RWPE1 (cell line): ENCODE measurements at regions of chr7 and their contacts with region 1.

Region 1: DNA sequence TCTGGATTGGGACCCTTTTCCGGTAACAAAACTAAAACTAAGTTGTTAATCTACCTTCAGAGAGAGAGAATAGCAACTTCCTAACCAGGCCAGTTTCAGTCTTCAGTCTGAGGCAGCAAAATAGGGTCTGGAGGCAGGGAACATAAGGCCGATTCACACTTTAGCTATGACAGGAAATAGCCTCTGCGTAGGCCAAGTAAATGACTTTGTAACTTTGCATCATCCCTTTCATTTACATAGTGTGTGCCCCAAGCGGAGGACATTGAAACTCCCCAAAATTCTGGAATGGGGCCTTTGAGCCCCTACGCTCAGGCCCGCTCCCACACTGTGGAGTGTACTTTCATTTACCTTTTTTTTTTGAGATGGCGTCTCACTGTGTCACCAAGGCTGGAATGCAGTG is 1.7 kb upstream of the UPP1 start:
- DNase-seq: no peak
- H3K27ac ChIP-seq: peak overlapping the region; percentile 100
- CTCF ChIP-seq: no peak

Region 2: GRCh38 chr7:47991741-47992311 is 95.5 kb before region 1 on chr7:
- CTCF ChIA-PET with region 1: interaction called, 4 read pairs
- POLR2A ChIA-PET with region 1: interaction called, 10 read pairs
- DNase-seq: peak; percentile 62
- H3K27ac ChIP-seq: peak overlapping the region; percentile 50
- CTCF ChIP-seq: peak; percentile 75

Region 3: GRCh38 chr7:48058990-48059389 is 28.4 kb before region 1 on chr7:
- CTCF ChIA-PET with region 1: no interaction called
- POLR2A ChIA-PET with region 1: no interaction called
- DNase-seq: no peak
- H3K27ac ChIP-seq: no peak overlapping the region
- CTCF ChIP-seq: no peak

Region 4: GRCh38 chr7:48074204-48074654 is 13.1 kb before region 1 on chr7:
- CTCF ChIA-PET with region 1: no interaction called
- POLR2A ChIA-PET with region 1: no interaction called
- DNase-seq: no peak
- H3K27ac ChIP-seq: no peak overlapping the region
- CTCF ChIP-seq: no peak

Region 5: DNA sequence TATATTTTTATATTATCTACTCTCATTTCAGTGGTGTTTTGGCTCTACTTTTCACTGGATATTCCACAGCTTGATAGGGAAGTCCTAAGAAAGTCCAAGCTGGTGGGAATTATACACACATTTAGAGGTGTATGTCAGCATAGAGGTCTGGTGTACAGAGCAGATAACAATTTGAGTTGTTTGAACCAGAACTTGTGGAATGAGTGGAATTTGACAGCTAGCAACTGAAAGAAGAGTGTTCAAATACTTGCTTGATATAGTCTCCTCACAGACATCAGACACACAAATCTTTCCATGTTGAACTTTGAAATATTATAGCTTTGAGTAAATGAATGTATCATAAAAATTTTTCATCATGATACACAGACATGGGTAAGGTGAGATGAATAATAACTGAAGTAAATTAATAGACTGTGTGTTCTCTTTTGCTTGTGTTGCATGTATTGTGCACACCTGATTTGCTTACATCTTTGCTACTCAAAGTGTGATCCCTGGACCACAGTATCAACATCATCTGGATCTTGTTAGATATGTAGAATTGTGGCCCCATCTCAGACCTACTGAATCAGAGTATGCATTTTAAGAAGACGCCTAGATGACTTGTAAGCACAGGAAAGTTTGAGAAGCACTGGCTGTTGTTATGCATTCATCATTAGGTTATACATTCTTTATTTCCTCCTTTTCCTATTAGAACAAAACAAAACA is 175.4 kb after region 1 on chr7:
- CTCF ChIA-PET with region 1: no interaction called
- POLR2A ChIA-PET with region 1: no interaction called
- DNase-seq: no peak
- H3K27ac ChIP-seq: no peak overlapping the region
- CTCF ChIP-seq: no peak